CD4-positive, alpha-beta T cell (primary cell): ENCODE measurements at regions of chr15 and their contacts with region 1.

Region 1: GRCh38 chr15:90529371-90530249 is at the start of gene CRTC3:
- DNase-seq: peak; percentile 31 to 85 (median 54)
- ATAC-seq: peak; percentile 80
- H3K4me3 ChIP-seq: peak within 1 kb of the TSS; percentile 94
- H3K4me3 Mint-ChIP-seq: peak within 1 kb of the TSS; percentile 97
- H3K27ac ChIP-seq: peak within 1 kb of the TSS; percentile 44 to 72
- H3K27ac Mint-ChIP-seq: peak within 1 kb of the TSS; percentile 92
- H3K4me1 ChIP-seq: peaks cover 36% of the 10 kb centered on the region
- H3K4me1 Mint-ChIP-seq: peaks cover 39% of the 10 kb centered on the region
- H3K27me3 ChIP-seq: no peaks in the 10 kb centered on the region
- H3K27me3 Mint-ChIP-seq: no peaks in the 10 kb centered on the region
- CTCF ChIP-seq: no peak
- total RNA-seq, gene CRTC3: 90.7 to 92.4 TPM

Region 2: GRCh38 chr15:90436952-90437351 is 92.7 kb before region 1 on chr15:
- CTCF ChIA-PET with region 1: no interaction called
- POLR2A ChIA-PET with region 1: no interaction called
- intact Hi-C with region 1: no loop called
- DNase-seq: peak in 1 of 14 experiments; percentile 23
- ATAC-seq: no peak
- H3K4me3 ChIP-seq: no peak overlapping the region
- H3K4me3 Mint-ChIP-seq: no peak overlapping the region
- H3K27ac ChIP-seq: no peak overlapping the region
- H3K27ac Mint-ChIP-seq: peak overlapping the region; percentile 4
- H3K4me1 ChIP-seq: no peaks in the 10 kb centered on the region
- H3K4me1 Mint-ChIP-seq: peaks cover 27% of the 10 kb centered on the region
- H3K27me3 ChIP-seq: no peaks in the 10 kb centered on the region
- H3K27me3 Mint-ChIP-seq: no peaks in the 10 kb centered on the region
- CTCF ChIP-seq: no peak

Region 3: DNA sequence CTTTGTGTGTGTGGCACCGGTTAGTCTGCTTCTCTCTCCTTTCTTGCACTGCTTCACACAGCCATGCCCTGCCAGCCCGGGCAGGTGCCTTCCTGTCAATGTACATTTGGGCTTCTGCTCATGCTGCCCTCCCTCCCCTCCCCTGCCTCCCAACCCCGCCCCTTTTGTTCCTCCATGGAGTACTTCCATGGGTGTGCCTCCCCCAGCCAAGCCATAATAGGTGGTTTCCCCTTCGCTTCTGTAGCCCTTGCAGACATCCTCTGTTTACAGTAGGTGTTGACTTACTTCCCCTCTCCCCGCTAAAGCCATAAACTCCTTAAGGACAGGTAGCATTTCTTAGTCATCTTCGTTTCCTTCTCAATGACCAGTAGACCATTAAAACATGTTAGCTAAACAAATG is 31.7 kb before region 1 on chr15:
- CTCF ChIA-PET with region 1: no interaction called
- POLR2A ChIA-PET with region 1: no interaction called
- intact Hi-C with region 1: no loop called
- DNase-seq: no peak
- ATAC-seq: no peak
- H3K4me3 ChIP-seq: no peak overlapping the region
- H3K4me3 Mint-ChIP-seq: no peak overlapping the region
- H3K27ac ChIP-seq: no peak overlapping the region
- H3K27ac Mint-ChIP-seq: no peak overlapping the region
- H3K4me1 ChIP-seq: peaks cover 7% of the 10 kb centered on the region
- H3K4me1 Mint-ChIP-seq: peaks cover 14% of the 10 kb centered on the region
- H3K27me3 ChIP-seq: no peaks in the 10 kb centered on the region
- H3K27me3 Mint-ChIP-seq: no peaks in the 10 kb centered on the region
- CTCF ChIP-seq: no peak

Region 4: GRCh38 chr15:90564051-90564450 is 34.4 kb after region 1 on chr15:
- CTCF ChIA-PET with region 1: interaction called, 5 read pairs
- POLR2A ChIA-PET with region 1: interaction called, 28 read pairs
- intact Hi-C with region 1: no loop called
- DNase-seq: peak in 3 of 14 experiments; percentile 58 to 63 (median 61)
- ATAC-seq: peak; percentile 38
- H3K4me3 ChIP-seq: no peak overlapping the region
- H3K4me3 Mint-ChIP-seq: peak overlapping the region; percentile 85
- H3K27ac ChIP-seq: peak overlapping the region; percentile 62 to 68
- H3K27ac Mint-ChIP-seq: peak overlapping the region; percentile 93
- H3K4me1 ChIP-seq: peaks cover 79% of the 10 kb centered on the region
- H3K4me1 Mint-ChIP-seq: peaks cover 87% of the 10 kb centered on the region
- H3K27me3 ChIP-seq: no peaks in the 10 kb centered on the region
- H3K27me3 Mint-ChIP-seq: no peaks in the 10 kb centered on the region
- CTCF ChIP-seq: no peak

Region 5: DNA sequence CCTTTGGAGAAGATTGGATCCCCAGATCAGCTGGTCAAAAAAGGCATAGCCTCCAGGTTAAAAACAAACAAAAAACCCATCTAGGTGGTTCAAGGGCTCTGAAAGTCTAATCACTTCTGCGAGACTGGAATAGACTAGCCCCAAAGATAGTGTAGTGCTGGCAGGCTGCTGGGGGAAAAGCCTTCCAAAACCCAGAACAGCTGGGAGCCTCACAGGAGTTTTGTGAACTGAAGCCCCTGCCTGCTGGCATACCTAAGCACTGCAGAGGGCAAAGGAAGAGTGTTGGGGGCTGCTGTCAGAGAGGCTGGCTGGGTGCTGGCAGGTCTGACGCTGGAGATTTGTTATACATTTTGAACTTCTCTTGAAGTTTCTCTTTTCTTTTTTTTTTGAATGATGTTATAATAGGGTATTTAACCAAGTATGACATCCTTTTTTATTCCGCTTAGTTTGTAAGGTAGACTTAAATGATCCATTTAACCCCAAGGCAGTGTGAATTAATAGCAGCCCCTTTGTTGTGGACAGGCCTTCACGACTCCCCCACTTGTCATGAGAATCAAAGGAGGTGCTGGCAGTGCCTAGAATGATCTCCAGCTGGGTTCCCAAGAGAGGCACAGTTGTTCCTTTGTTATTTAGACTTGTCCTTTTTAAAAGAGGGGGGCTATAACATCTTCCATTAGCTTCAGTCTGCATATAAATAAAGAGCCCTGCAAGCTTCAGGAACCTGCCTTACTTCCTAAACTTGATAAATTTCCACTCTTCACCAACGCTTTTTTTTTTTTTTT is 54.1 kb after region 1 on chr15:
- CTCF ChIA-PET with region 1: interaction called, 4 read pairs
- POLR2A ChIA-PET with region 1: interaction called, 10 read pairs
- intact Hi-C with region 1: no loop called
- DNase-seq: no peak
- ATAC-seq: no peak
- H3K4me3 ChIP-seq: no peak overlapping the region
- H3K4me3 Mint-ChIP-seq: no peak overlapping the region
- H3K27ac ChIP-seq: no peak overlapping the region
- H3K27ac Mint-ChIP-seq: peak overlapping the region; percentile 89
- H3K4me1 ChIP-seq: peaks cover 59% of the 10 kb centered on the region
- H3K4me1 Mint-ChIP-seq: peaks cover 66% of the 10 kb centered on the region
- H3K27me3 ChIP-seq: no peaks in the 10 kb centered on the region
- H3K27me3 Mint-ChIP-seq: no peaks in the 10 kb centered on the region
- CTCF ChIP-seq: no peak